GM18951 (cell line): ENCODE measurements at regions of chr19 and their contacts with region 1.

Region 1: GRCh38 chr19:12440541-12441316 is at the start of gene ZNF443:
- POLR2A ChIP-seq: peak; percentile 70

Region 2: DNA sequence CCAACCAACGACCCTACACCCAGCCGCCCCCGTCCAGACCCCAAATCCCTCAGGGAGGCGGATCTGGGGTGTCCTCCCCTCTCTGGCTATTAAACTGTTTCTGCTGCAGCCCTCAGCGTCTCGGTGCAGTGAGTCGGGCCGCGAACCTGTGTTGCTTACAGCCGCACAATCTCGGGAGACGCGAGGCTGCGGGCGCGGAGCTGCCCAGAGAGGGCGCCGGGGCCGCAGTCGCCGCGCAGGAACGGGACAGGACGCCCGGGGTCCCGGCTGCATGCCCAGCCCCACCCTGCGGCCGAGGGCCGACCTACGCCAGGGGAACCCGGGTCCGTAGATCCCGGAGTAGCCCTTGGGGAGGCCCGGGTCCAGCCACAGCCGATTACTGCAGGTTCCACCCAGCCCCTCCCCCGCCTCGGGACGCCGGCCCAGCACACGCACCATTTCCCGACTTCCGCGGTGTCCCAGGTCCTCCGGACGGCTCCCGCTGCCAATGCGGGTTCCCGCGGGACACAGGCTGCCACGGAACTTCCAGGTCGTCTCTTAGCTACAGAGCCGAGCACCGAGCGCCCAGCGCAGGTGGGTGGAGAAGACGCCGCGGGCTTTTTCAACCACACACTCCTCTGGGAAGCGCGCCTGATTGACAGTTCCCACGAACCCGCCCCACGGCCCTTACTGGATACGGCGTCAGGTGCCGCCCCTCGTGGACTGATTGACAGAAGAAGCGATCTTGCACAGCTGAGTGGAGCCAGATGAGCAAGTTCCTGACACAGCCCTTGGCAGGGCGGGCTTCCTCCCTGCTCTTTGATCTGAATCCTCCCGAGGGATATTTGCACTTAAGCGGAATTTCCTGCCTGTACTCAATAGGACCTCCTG is 39.9 kb before region 1 on chr19 and contains the start of gene ZNF799:
- in situ Hi-C with region 1: loop called (anchors 5 kb)
- POLR2A ChIP-seq: peak; percentile 69